ENCODE measurements at regions of chr17 and their contacts with region 1.

Region 1: GRCh38 chr17:30970831-30971567 is at the start of gene RNF135:
- DNase-seq: peak; percentile 92
- H3K4me3 ChIP-seq: peak within 1 kb of the TSS; percentile 63 to 90 (median 73)
- H3K27ac ChIP-seq: peak within 1 kb of the TSS; percentile 90 to 97 (median 94)
- H3K4me1 ChIP-seq: peaks cover 0 to 31% (median 5%) of the 10 kb centered on the region in 4 donors
- H3K27me3 ChIP-seq: no peaks in the 10 kb centered on the region
- CTCF ChIP-seq: peak in 3 of 4 experiments; percentile 40 to 54 (median 49)
- EP300 ChIP-seq: no peak
- POLR2A ChIP-seq: no peak
- total RNA-seq, gene RNF135: 17.9 to 25.3 (median 18.8) TPM

Region 2: DNA sequence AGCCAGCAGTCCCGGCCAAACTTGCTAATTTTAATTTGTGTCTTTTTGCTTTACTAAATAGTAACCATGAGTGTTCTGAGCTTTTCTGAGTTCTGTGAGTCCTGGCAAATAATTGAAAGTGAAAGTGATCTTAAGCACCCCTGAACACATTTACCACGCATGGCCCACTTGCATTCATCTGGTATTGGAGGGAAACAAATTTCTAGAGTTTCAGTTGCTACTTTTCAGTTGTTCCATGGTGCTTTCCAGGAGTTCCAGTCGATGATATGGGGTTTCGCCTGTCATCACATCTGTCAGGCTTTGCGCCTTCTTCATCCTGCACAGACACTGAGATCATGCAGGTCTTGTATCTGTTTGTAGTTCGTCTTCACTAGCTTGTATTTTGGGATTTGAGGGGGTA is 190.7 kb before region 1 on chr17:
- intact Hi-C with region 1: no loop called
- DNase-seq: no peak
- H3K4me3 ChIP-seq: no peak overlapping the region
- H3K27ac ChIP-seq: no peak overlapping the region
- H3K4me1 ChIP-seq: no peaks in the 10 kb centered on the region
- H3K27me3 ChIP-seq: no peaks in the 10 kb centered on the region
- CTCF ChIP-seq: no peak
- EP300 ChIP-seq: no peak
- POLR2A ChIP-seq: no peak

Region 3: GRCh38 chr17:30906101-30906911 is 64.7 kb before region 1 on chr17 and contains the start of gene TEFM:
- intact Hi-C with region 1: loop called (anchors 1 kb)
- DNase-seq: peak; percentile 91
- H3K4me3 ChIP-seq: peak within 1 kb of the TSS; percentile 63 to 75 (median 70)
- H3K27ac ChIP-seq: peak within 1 kb of the TSS; percentile 86 to 91 (median 90)
- H3K4me1 ChIP-seq: peaks cover 0 to 28% (median 18%) of the 10 kb centered on the region in 4 donors
- H3K27me3 ChIP-seq: no peaks in the 10 kb centered on the region
- CTCF ChIP-seq: no peak
- EP300 ChIP-seq: no peak
- POLR2A ChIP-seq: peak; percentile 37 to 51
- total RNA-seq, gene TEFM: 6.9 to 12.3 (median 10.7) TPM

Region 4: GRCh38 chr17:31008374-31009041 is 37.5 kb after region 1 on chr17:
- intact Hi-C with region 1: loop called (anchors 5 kb)
- DNase-seq: peak; percentile 73
- H3K4me3 ChIP-seq: peak overlapping the region; percentile 49 to 66 (median 63)
- H3K27ac ChIP-seq: peak overlapping the region; percentile 72 to 92 (median 83)
- H3K4me1 ChIP-seq: peaks cover 0 to 7% (median 0%) of the 10 kb centered on the region in 4 donors
- H3K27me3 ChIP-seq: no peaks in the 10 kb centered on the region
- CTCF ChIP-seq: no peak
- EP300 ChIP-seq: no peak
- POLR2A ChIP-seq: no peak

Measured in sigmoid colon (tissue), 7 donors.